Activated CD4-positive, alpha-beta T cell treated with anti-CD3 and anti-CD28 coated beads for 36 hours (primary cell): ENCODE measurements at regions of chr1 and their contacts with region 1.

Region 1: DNA sequence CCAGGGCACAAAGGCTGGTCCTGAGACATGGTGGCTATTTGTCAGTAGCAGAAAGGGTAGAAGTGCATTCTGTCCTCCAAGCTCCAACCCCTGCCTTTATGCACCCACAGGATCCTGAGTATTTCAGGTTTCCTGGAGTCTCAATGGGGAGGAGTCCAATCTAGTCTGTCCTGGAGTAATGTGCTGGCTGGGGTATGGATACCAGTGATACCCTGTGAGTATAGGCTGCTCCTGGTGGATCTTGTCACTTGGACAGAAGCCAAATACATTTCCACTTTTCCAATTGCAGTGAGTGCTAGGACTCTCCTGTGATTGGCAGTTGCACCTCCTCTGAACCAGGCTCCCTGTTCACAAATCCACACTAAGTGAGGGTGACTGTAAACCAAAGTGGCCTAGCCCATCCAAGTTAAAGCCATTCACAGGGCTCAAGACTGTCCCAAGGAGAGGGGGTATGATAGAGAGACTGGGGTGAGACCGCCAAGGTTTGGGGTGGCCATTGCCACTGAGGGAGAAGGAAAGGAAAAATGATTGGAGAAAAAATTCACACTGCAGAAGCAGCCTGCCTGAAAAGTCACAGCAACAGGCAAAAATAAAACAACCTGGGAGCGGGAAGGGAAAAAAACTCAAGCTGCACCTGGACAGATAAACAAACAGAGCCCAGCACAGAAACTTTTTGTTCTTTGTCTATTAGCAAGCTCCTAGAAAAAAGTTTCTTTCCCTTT is 163.4 kb upstream of the ETV3 start:
- DNase-seq: no peak
- ATAC-seq: no peak
- H3K4me3 Mint-ChIP-seq: no peak overlapping the region
- H3K27ac Mint-ChIP-seq: no peak overlapping the region
- H3K4me1 Mint-ChIP-seq: no peaks in the 10 kb centered on the region
- H3K27me3 Mint-ChIP-seq: peaks cover 2% of the 10 kb centered on the region

Region 2: DNA sequence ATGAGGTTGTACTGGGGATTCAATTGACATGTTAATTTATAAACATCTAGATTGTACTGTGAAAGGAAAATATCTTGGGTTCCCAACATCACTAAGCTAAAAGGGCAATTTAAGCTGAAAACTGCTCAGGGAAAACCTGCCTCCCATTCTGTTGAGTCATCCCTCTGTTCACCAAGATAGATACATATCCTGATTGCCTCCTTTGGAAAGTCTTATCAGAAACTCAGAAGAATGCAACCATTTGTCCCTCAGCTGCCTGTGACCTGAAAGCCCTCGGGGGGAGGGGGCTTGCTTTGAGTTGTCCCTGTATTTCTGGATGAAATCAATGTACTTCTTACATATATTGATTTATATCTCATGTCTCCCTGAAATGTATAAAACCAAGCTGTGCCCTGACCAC is 23.6 kb after region 1 on chr1:
- CTCF ChIA-PET with region 1: no interaction called
- POLR2A ChIA-PET with region 1: no interaction called
- intact Hi-C with region 1: loop called in 1 of 2 experiments (anchors 2 kb)
- DNase-seq: no peak
- ATAC-seq: no peak
- H3K4me3 Mint-ChIP-seq: no peak overlapping the region
- H3K27ac Mint-ChIP-seq: no peak overlapping the region
- H3K4me1 Mint-ChIP-seq: no peaks in the 10 kb centered on the region
- H3K27me3 Mint-ChIP-seq: peaks cover 20% of the 10 kb centered on the region